CD4-positive, alpha-beta T cell (primary cell): ENCODE measurements at regions of chr9 and their contacts with region 1.

Region 1: GRCh38 chr9:99906403-99907207 is at the start of gene STX17:
- DNase-seq: peak; percentile 69 to 92 (median 79)
- ATAC-seq: peak; percentile 89
- H3K4me3 ChIP-seq: peak within 1 kb of the TSS; percentile 91
- H3K4me3 Mint-ChIP-seq: peak within 1 kb of the TSS; percentile 100
- H3K27ac ChIP-seq: peak within 1 kb of the TSS; percentile 98
- H3K27ac Mint-ChIP-seq: peak within 1 kb of the TSS; percentile 100
- H3K4me1 ChIP-seq: peaks cover 11% of the 10 kb centered on the region
- H3K4me1 Mint-ChIP-seq: peaks cover 46% of the 10 kb centered on the region
- H3K27me3 ChIP-seq: no peaks in the 10 kb centered on the region
- H3K27me3 Mint-ChIP-seq: no peaks in the 10 kb centered on the region
- CTCF ChIP-seq: no peak
- total RNA-seq, gene STX17: 29.3 to 31.3 TPM

Region 2: GRCh38 chr9:98807070-98807810 is 1099.4 kb before region 1 on chr9 and contains the start of gene GALNT12:
- CTCF ChIA-PET with region 1: no interaction called
- POLR2A ChIA-PET with region 1: no interaction called
- intact Hi-C with region 1: loop called in 1 of 2 experiments (anchors 10 kb)
- DNase-seq: peak in 13 of 14 experiments; percentile 26 to 77 (median 54)
- ATAC-seq: peak; percentile 83
- H3K4me3 ChIP-seq: peak within 1 kb of the TSS; percentile 77
- H3K4me3 Mint-ChIP-seq: peak within 1 kb of the TSS; percentile 94
- H3K27ac ChIP-seq: no peak within 1 kb of the TSS
- H3K27ac Mint-ChIP-seq: peak within 1 kb of the TSS; percentile 39
- H3K4me1 ChIP-seq: peaks cover 20% of the 10 kb centered on the region
- H3K4me1 Mint-ChIP-seq: peaks cover 27% of the 10 kb centered on the region
- H3K27me3 ChIP-seq: peaks cover 4 to 5% of the 10 kb centered on the region in 2 experiments
- H3K27me3 Mint-ChIP-seq: peaks cover 8% of the 10 kb centered on the region
- CTCF ChIP-seq: no peak
- total RNA-seq, gene GALNT12: 8.7 to 11.5 TPM

Region 3: DNA sequence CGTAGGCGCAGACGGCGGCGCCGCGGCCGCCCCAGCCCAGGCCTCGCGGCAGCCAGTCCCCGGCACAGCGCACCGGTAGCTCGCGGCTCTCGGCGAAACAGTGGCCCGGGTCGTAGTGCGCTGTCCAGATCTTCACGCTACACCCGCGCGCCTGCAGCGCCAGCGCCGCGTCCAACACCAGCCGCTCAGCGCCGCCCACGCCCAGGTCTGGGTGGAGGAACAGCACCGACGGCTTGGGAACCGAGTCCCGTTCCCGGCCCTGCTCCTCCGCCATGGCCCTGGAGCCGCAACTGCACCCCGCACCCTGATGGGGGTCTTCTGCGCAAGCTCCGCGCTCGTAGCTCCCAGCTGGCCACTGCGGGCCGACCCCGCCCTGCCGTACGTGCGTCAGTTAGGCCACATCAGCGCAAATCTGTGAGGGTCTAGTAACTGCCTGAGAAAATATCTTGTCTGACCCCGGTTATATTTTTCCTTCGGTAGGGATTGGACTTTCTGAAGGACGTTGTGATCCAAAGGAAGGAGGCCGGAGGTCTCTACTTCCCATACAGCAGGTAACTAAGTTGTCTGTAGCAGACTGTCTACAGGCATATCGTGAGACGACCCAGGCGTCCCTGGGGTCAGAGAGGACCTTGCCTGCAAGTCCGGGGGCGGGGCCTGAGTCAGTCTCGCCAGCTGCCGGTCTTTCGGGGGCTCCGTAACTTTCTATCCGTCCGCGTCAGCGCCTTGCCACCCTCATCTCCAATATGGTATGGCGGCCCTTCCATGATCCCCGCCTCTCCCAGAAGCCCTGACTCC is 684.8 kb before region 1 on chr9 and contains the starts of genes ALG2 and SEC61B:
- CTCF ChIA-PET with region 1: no interaction called
- POLR2A ChIA-PET with region 1: no interaction called
- intact Hi-C with region 1: loop called in 1 of 2 experiments (anchors 2 kb)
- DNase-seq: peak; percentile 87 to 96 (median 90)
- ATAC-seq: peak; percentile 84
- H3K4me3 ChIP-seq: peak within 1 kb of the TSS; percentile 91
- H3K4me3 Mint-ChIP-seq: peak within 1 kb of the TSS; percentile 98
- H3K27ac ChIP-seq: peak within 1 kb of the TSS; percentile 89 to 95
- H3K27ac Mint-ChIP-seq: peak within 1 kb of the TSS; percentile 99
- H3K4me1 ChIP-seq: peaks cover 33% of the 10 kb centered on the region
- H3K4me1 Mint-ChIP-seq: peaks cover 81% of the 10 kb centered on the region
- H3K27me3 ChIP-seq: no peaks in the 10 kb centered on the region
- H3K27me3 Mint-ChIP-seq: no peaks in the 10 kb centered on the region
- CTCF ChIP-seq: no peak
- total RNA-seq, gene ALG2: 18.1 to 19.9 TPM
- total RNA-seq, gene SEC61B: 83.4 to 84.2 TPM

Region 4: GRCh38 chr9:99878651-99879050 is 28.0 kb before region 1 on chr9:
- CTCF ChIA-PET with region 1: no interaction called
- POLR2A ChIA-PET with region 1: no interaction called
- intact Hi-C with region 1: no loop called
- DNase-seq: no peak
- ATAC-seq: no peak
- H3K4me3 ChIP-seq: no peak overlapping the region
- H3K4me3 Mint-ChIP-seq: no peak overlapping the region
- H3K27ac ChIP-seq: no peak overlapping the region
- H3K27ac Mint-ChIP-seq: no peak overlapping the region
- H3K4me1 ChIP-seq: no peaks in the 10 kb centered on the region
- H3K4me1 Mint-ChIP-seq: no peaks in the 10 kb centered on the region
- H3K27me3 ChIP-seq: no peaks in the 10 kb centered on the region
- H3K27me3 Mint-ChIP-seq: peaks cover 8% of the 10 kb centered on the region
- CTCF ChIP-seq: no peak

Region 5: DNA sequence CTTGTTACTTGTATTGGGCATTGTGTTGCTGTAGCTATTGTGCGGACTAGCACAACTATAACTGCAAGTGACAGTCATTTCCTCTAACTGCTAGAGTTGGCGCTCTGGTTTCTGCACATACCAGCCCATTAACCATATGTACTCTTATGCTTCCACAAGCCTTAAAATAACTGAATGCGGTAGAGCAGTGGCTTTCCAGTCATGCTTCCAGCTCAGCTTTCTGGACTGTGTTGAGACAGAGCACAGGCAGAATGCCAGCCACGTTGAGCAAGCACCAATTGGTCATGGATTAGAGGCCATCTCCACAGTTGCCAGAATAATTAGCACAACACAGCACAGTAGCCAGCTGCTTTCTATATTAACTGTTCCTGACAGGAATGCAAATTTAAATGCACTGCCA is 204.6 kb after region 1 on chr9:
- CTCF ChIA-PET with region 1: no interaction called
- POLR2A ChIA-PET with region 1: no interaction called
- intact Hi-C with region 1: no loop called
- DNase-seq: no peak
- ATAC-seq: no peak
- H3K4me3 ChIP-seq: no peak overlapping the region
- H3K4me3 Mint-ChIP-seq: no peak overlapping the region
- H3K27ac ChIP-seq: no peak overlapping the region
- H3K27ac Mint-ChIP-seq: no peak overlapping the region
- H3K4me1 ChIP-seq: no peaks in the 10 kb centered on the region
- H3K4me1 Mint-ChIP-seq: peaks cover 18% of the 10 kb centered on the region
- H3K27me3 ChIP-seq: no peaks in the 10 kb centered on the region
- H3K27me3 Mint-ChIP-seq: no peaks in the 10 kb centered on the region
- CTCF ChIP-seq: no peak

Region 6: DNA sequence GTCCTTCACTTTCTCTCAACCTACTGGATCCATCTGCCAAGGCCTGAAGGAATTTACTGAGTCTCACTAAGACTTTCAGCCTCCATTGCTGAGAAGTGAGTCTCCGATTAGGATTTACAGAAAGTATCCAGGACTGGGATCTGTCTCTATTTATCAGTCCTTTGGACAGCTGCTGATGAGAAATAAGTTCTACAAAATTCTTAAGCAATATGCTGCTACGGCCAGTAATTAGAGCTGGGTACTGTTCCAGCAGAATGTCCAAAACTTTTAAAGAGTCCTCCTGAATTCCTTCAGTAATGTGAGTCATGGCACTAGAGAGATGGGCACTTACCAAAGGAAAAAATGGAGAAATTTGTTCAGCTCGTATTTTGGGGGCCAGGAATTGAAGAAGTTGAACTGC is 440.2 kb after region 1 on chr9:
- CTCF ChIA-PET with region 1: no interaction called
- POLR2A ChIA-PET with region 1: no interaction called
- intact Hi-C with region 1: loop called in 1 of 2 experiments (anchors 5 kb)
- DNase-seq: no peak
- ATAC-seq: no peak
- H3K4me3 ChIP-seq: no peak overlapping the region
- H3K4me3 Mint-ChIP-seq: no peak overlapping the region
- H3K27ac ChIP-seq: no peak overlapping the region
- H3K27ac Mint-ChIP-seq: no peak overlapping the region
- H3K4me1 ChIP-seq: peaks cover 9% of the 10 kb centered on the region
- H3K4me1 Mint-ChIP-seq: peaks cover 76% of the 10 kb centered on the region
- H3K27me3 ChIP-seq: no peaks in the 10 kb centered on the region
- H3K27me3 Mint-ChIP-seq: no peaks in the 10 kb centered on the region
- CTCF ChIP-seq: no peak

Region 7: DNA sequence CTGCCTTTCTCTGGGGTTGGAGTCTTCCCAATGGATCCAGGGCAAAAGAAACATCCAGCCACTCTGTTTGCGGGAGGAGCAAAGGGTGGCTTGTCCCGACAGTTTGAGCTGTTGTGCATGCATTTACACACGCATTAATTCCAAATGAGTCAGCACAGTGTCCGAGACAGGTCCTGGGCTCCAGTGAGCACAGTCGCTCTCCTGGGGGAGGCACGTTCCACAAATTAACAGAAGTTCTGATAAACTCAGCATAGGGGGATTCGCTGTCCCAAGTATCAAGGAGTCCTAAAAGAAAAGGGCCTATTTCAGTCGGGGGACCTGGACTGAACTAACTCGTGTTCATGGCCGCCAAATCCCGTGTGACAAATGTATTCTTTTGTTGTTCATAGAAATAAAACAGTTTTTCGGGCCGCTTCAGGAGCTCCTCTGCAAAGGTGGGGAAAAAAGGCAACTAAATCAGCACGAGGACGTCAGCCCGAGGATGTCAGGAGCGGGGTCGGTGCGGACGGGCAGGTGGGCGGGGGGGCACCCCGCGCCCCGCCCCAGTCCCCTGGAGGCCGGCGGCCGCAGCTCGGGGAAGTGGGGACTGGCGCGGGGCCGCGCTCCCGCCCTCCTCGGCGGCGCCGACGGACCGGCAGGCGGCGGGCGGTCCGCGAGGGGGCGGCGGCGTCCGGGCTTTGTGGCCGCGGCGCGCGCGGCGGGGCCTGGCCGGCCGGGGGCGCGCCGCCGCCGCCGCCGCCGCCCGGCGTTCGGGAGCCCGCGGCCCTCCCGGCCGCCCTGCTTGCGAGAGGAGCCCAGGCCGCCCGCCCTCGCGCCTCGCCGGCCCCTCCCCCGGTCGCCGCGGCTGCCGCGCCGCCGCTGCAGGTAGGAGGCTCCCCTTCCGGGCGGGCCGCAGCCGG is 520.2 kb after region 1 on chr9 and contains the start of gene MSANTD3:
- CTCF ChIA-PET with region 1: no interaction called
- POLR2A ChIA-PET with region 1: no interaction called
- intact Hi-C with region 1: loop called in 1 of 2 experiments (anchors 5 kb)
- DNase-seq: peak; percentile 28 to 79 (median 54)
- ATAC-seq: peak; percentile 80
- H3K4me3 ChIP-seq: peak within 1 kb of the TSS; percentile 78
- H3K4me3 Mint-ChIP-seq: peak within 1 kb of the TSS; percentile 98
- H3K27ac ChIP-seq: peak within 1 kb of the TSS in 1 of 2 donors; percentile 0
- H3K27ac Mint-ChIP-seq: peak within 1 kb of the TSS; percentile 96
- H3K4me1 ChIP-seq: peaks cover 20% of the 10 kb centered on the region
- H3K4me1 Mint-ChIP-seq: peaks cover 44% of the 10 kb centered on the region
- H3K27me3 ChIP-seq: peaks cover 0 to 7% of the 10 kb centered on the region in 2 experiments
- H3K27me3 Mint-ChIP-seq: peaks cover 7% of the 10 kb centered on the region
- CTCF ChIP-seq: no peak
- total RNA-seq, gene MSANTD3: 8.8 to 9.6 TPM

Region 8: DNA sequence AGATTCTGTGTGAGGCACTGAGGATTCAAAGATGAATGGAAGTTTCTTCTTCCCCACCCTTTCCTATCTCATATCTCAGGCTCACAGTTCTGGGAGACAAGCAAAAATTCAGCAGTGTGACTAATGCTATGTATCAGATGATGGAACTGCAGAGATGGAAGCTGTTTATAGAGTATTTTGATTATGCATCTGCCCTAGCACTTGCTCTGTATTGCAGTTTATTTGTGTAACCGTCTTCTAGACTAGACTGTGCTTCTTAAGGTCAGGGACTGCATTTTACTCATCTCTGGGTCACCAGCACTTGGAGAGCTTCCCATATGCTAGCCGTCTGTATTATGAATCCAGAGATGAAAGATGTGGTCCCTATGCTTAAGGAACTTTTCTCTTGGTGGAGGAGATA is 683.9 kb after region 1 on chr9:
- CTCF ChIA-PET with region 1: no interaction called
- POLR2A ChIA-PET with region 1: no interaction called
- intact Hi-C with region 1: no loop called
- DNase-seq: no peak
- ATAC-seq: no peak
- H3K4me3 ChIP-seq: no peak overlapping the region
- H3K4me3 Mint-ChIP-seq: no peak overlapping the region
- H3K27ac ChIP-seq: no peak overlapping the region
- H3K27ac Mint-ChIP-seq: no peak overlapping the region
- H3K4me1 ChIP-seq: no peaks in the 10 kb centered on the region
- H3K4me1 Mint-ChIP-seq: peaks cover 5% of the 10 kb centered on the region
- H3K27me3 ChIP-seq: no peaks in the 10 kb centered on the region
- H3K27me3 Mint-ChIP-seq: no peaks in the 10 kb centered on the region
- CTCF ChIP-seq: no peak

Region 9: DNA sequence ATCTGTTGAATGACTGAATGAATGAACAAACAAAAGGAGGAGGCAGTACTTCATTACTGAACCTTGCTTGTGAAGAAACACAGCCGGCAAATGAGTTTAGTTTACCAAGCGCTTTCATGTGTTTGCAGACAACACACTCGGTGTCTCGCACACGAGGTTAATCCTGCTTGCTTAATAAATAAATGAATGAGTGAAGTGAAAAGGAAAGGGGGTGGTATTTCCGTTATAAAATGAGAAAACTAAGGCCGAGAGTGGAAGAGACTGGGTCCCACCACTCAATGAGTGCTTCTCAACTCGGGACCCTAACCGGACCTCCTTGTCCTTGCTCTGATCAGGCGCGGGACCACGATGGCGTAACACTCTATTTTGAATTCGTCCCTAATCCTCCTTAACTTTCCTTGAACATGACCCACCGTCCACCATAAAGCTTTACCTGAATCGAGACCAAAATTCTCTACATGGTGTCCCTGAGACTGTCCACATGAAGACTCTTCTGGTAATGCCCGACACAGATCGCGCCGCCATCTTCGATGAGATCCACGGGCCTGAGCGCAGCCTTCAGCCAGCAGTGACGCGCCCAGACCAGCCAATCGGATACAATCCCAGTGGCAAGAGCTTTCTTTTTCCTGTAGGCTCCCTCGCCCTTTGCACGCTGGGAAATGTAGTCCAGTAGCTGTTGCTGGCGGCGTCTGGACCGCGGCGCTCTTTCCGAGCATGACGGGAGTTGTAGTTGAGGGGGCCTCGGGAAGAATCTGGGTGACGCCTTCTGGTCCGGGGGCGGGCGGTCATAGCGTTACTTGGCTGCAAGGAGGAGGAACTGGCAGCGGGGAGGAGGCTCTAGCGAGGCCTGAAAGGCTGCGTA is 1491.7 kb after region 1 on chr9 and contains the starts of genes MRPL50 and ZNF189:
- CTCF ChIA-PET with region 1: interaction called, 3 read pairs
- POLR2A ChIA-PET with region 1: interaction called, 4 read pairs
- intact Hi-C with region 1: loop called in 1 of 2 experiments (anchors 5 kb)
- DNase-seq: peak; percentile 90 to 99 (median 94)
- ATAC-seq: peak; percentile 94
- H3K4me3 ChIP-seq: peak within 1 kb of the TSS; percentile 81
- H3K4me3 Mint-ChIP-seq: peak within 1 kb of the TSS; percentile 99
- H3K27ac ChIP-seq: peak within 1 kb of the TSS; percentile 87 to 92
- H3K27ac Mint-ChIP-seq: peak within 1 kb of the TSS; percentile 99
- H3K4me1 ChIP-seq: peaks cover 32% of the 10 kb centered on the region
- H3K4me1 Mint-ChIP-seq: peaks cover 86% of the 10 kb centered on the region
- H3K27me3 ChIP-seq: no peaks in the 10 kb centered on the region
- H3K27me3 Mint-ChIP-seq: no peaks in the 10 kb centered on the region
- CTCF ChIP-seq: no peak
- total RNA-seq, gene MRPL50: 5.9 to 6.1 TPM
- total RNA-seq, gene ZNF189: 5.0 to 5.3 TPM